Naive thymus-derived CD4-positive, alpha-beta T cell (primary cell): ENCODE measurements at regions of chr6 and their contacts with region 1.

Region 1: GRCh38 chr6:88982720-88983119 is 19.3 kb upstream of the RNGTT start:
- DNase-seq: peak in 7 of 9 donors; percentile 29 to 62 (median 55)
- ATAC-seq: peak; percentile 94
- H3K4me3 ChIP-seq: no peak overlapping the region
- H3K4me3 Mint-ChIP-seq: no peak overlapping the region
- H3K27ac ChIP-seq: no peak overlapping the region
- H3K27ac Mint-ChIP-seq: no peak overlapping the region
- H3K4me1 ChIP-seq: no peaks in the 10 kb centered on the region
- H3K4me1 Mint-ChIP-seq: peaks cover 0 to 7% (median 0%) of the 10 kb centered on the region in 7 donors
- H3K27me3 ChIP-seq: no peaks in the 10 kb centered on the region
- H3K27me3 Mint-ChIP-seq: peaks cover 0 to 23% (median 0%) of the 10 kb centered on the region in 5 donors

Region 2: GRCh38 chr6:89122625-89123024 is 139.9 kb after region 1 on chr6:
- CTCF ChIA-PET with region 1: interaction called, 3 read pairs
- POLR2A ChIA-PET with region 1: no interaction called
- intact Hi-C with region 1: loop called (anchors 1 to 2 kb)
- DNase-seq: peak in 4 of 9 donors; percentile 8 to 36 (median 26)
- ATAC-seq: peak; percentile 58
- H3K4me3 ChIP-seq: no peak overlapping the region
- H3K4me3 Mint-ChIP-seq: no peak overlapping the region
- H3K27ac ChIP-seq: no peak overlapping the region
- H3K27ac Mint-ChIP-seq: no peak overlapping the region
- H3K4me1 ChIP-seq: no peaks in the 10 kb centered on the region
- H3K4me1 Mint-ChIP-seq: peaks cover 0 to 6% (median 3%) of the 10 kb centered on the region in 7 donors
- H3K27me3 ChIP-seq: no peaks in the 10 kb centered on the region
- H3K27me3 Mint-ChIP-seq: peaks cover 0 to 31% (median 0%) of the 10 kb centered on the region in 5 donors

Region 3: GRCh38 chr6:89242574-89243330 is 260.0 kb after region 1 on chr6:
- CTCF ChIA-PET with region 1: interaction called, 35 read pairs
- POLR2A ChIA-PET with region 1: interaction called, 4 read pairs
- intact Hi-C with region 1: loop called (anchors 1 kb)
- DNase-seq: peak in 4 of 9 donors; percentile 15 to 35 (median 33)
- ATAC-seq: peak; percentile 48
- H3K4me3 ChIP-seq: no peak overlapping the region
- H3K4me3 Mint-ChIP-seq: no peak overlapping the region
- H3K27ac ChIP-seq: no peak overlapping the region
- H3K27ac Mint-ChIP-seq: no peak overlapping the region
- H3K4me1 ChIP-seq: peaks cover 6 to 8% of the 10 kb centered on the region in 2 donors
- H3K4me1 Mint-ChIP-seq: peaks cover 13 to 29% (median 19%) of the 10 kb centered on the region in 7 donors
- H3K27me3 ChIP-seq: no peaks in the 10 kb centered on the region
- H3K27me3 Mint-ChIP-seq: peaks cover 0 to 34% (median 8%) of the 10 kb centered on the region in 5 donors

Region 4: DNA sequence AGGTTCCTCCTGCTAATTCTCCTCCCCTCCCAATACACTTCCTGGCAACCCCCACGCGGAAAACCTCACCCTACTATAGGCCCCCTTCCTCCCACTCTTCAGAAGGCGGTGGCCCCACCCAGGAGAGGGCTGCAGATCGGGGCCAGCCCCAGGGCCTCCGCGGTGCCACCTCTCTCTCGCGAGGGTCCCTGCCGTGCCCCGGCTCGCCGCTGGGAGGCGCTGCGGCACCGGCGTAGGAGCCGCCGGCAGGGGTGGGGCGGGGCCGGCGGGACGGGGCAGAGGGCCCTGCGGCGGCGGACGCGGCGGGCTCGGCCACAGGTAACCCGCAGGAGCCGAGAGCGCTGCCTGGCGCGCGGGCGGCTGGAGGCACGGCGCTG is 450.1 kb after region 1 on chr6 and contains the start of gene ANKRD6:
- CTCF ChIA-PET with region 1: interaction called, 5 read pairs
- POLR2A ChIA-PET with region 1: no interaction called
- intact Hi-C with region 1: loop called in 1 of 2 experiments (anchors 5 kb)
- DNase-seq: peak; percentile 61 to 96 (median 81)
- ATAC-seq: peak; percentile 98
- H3K4me3 ChIP-seq: peak within 1 kb of the TSS; percentile 63
- H3K4me3 Mint-ChIP-seq: peak within 1 kb of the TSS; percentile 83 to 95 (median 90)
- H3K27ac ChIP-seq: peak within 1 kb of the TSS; percentile 46
- H3K27ac Mint-ChIP-seq: peak within 1 kb of the TSS; percentile 43 to 93 (median 82)
- H3K4me1 ChIP-seq: peaks cover 7 to 13% of the 10 kb centered on the region in 2 donors
- H3K4me1 Mint-ChIP-seq: peaks cover 9 to 36% (median 22%) of the 10 kb centered on the region in 7 donors
- H3K27me3 ChIP-seq: no peaks in the 10 kb centered on the region
- H3K27me3 Mint-ChIP-seq: peaks cover 0 to 58% (median 0%) of the 10 kb centered on the region in 5 donors
- total RNA-seq, gene ANKRD6: 3.1 to 6.6 (median 3.8) TPM